Right ventricle myocardium superior (tissue), 1 donor: ENCODE measurements at regions of chrX and their contacts with region 1.

Region 1: GRCh38 chrX:46903458-46904242 is 8.6 kb upstream of the JADE3 start:
- DNase-seq: peak; percentile 83
- ATAC-seq: peak; percentile 99

Region 2: DNA sequence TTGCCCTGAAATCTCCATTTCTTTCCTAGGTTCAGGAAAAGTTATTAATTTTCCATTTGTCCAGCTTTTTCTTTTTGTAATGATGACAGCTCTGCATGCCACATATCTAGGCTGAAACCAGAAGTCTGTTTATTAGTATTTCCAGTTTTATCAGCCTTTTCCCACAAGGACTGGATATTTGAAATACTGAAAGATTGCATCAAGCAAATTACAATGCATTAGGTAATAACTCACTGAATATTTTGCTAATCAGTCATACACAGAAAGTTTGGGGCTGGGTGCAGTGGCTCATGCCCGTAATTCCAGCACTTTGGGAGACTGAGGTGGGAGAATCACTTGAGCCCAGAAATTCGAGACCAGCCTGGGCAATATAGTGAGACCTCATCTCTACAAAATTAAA is 166.2 kb before region 1 on chrX:
- intact Hi-C with region 1: no loop called
- DNase-seq: no peak
- ATAC-seq: no peak

Region 3: DNA sequence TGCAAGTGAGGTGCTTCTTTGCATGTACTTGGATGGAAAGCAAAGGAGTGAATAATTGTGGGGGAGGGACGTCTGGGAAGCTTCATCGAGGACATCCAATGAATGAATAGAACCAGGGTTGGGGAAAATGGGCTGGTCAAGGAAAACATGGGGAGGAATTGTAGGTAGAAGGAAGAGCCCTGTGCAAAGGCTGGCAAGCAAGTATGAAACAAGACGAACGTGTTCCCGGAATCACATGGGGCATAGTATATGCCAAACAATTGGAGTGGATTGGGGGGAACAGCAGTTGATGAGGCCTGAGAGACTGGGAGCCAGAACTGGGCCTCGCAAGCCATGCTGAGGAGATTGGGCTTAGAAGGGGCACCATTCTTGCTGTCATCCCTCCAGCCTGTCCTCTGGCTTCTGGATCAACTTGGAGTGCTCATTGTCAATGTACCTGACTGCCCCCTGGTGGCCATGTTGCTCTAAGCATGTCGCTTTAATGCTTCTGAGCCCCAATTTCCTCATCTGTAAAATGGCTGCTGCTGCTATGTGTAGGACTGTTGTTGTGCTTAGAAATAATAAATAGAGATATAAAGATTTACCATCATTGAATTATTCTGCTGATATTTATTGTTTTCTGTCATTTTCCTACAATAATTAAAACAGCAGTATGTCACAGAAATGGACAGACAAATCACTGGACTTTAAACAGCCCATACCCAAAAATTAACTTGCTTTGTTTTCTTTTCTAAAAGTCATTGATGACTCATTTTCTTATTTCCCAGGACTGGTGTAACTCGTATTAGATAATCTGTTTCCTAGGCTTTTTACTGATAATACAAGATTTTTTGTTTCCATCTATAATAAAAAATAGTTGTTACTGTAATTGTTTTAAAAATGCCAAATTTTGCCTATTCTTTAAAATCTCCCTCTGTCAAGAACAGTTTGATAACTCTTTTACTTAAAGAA is 75.0 kb after region 1 on chrX:
- intact Hi-C with region 1: loop called (anchors 5 kb)
- DNase-seq: peak; percentile 75
- ATAC-seq: peak; percentile 64

Region 4: GRCh38 chrX:47030339-47030738 is 126.7 kb after region 1 on chrX:
- intact Hi-C with region 1: loop called (anchors 5 kb)
- DNase-seq: no peak
- ATAC-seq: no peak